ENCODE measurements at regions of chr4 and their contacts with region 1.

Region 1: GRCh38 chr4:103099691-103100392 is at the start of gene BDH2:
- DNase-seq: peak in 8 of 9 experiments; percentile 3 to 91 (median 48)
- ATAC-seq: peak; percentile 99
- H3K4me3 ChIP-seq: peak within 1 kb of the TSS; percentile 51 to 60
- H3K4me3 Mint-ChIP-seq: peak within 1 kb of the TSS; percentile 85
- H3K27ac ChIP-seq: peak within 1 kb of the TSS; percentile 4 to 37
- H3K27ac Mint-ChIP-seq: peak within 1 kb of the TSS; percentile 92
- H3K4me1 ChIP-seq: peaks cover 15% of the 10 kb centered on the region
- H3K4me1 Mint-ChIP-seq: peaks cover 41% of the 10 kb centered on the region
- H3K27me3 ChIP-seq: no peaks in the 10 kb centered on the region
- H3K27me3 Mint-ChIP-seq: no peaks in the 10 kb centered on the region
- CTCF ChIP-seq: peak; percentile 78
- total RNA-seq, gene BDH2: 16.4 to 19.9 TPM

Region 2: GRCh38 chr4:102430461-102430910 is 669.4 kb before region 1 on chr4:
- CTCF ChIA-PET with region 1: no interaction called
- POLR2A ChIA-PET with region 1: no interaction called
- intact Hi-C with region 1: loop called (anchors 2 to 5 kb)
- DNase-seq: peak in 1 of 9 experiments; percentile 19
- ATAC-seq: no peak
- H3K4me3 ChIP-seq: peak overlapping the region; percentile 57 to 58
- H3K4me3 Mint-ChIP-seq: peak overlapping the region; percentile 88
- H3K27ac ChIP-seq: peak overlapping the region; percentile 34 to 55
- H3K27ac Mint-ChIP-seq: no peak overlapping the region
- H3K4me1 ChIP-seq: peaks cover 4% of the 10 kb centered on the region
- H3K4me1 Mint-ChIP-seq: peaks cover 8% of the 10 kb centered on the region
- H3K27me3 ChIP-seq: no peaks in the 10 kb centered on the region
- H3K27me3 Mint-ChIP-seq: no peaks in the 10 kb centered on the region
- CTCF ChIP-seq: no peak

Region 3: GRCh38 chr4:102620697-102621497 is 478.9 kb before region 1 on chr4:
- CTCF ChIA-PET with region 1: interaction called, 4 read pairs
- POLR2A ChIA-PET with region 1: no interaction called
- intact Hi-C with region 1: loop called in 1 of 2 experiments (anchors 5 kb)
- DNase-seq: peak in 1 of 9 experiments; percentile 56
- ATAC-seq: peak; percentile 50
- H3K4me3 ChIP-seq: no peak overlapping the region
- H3K4me3 Mint-ChIP-seq: no peak overlapping the region
- H3K27ac ChIP-seq: no peak overlapping the region
- H3K27ac Mint-ChIP-seq: peak overlapping the region; percentile 53
- H3K4me1 ChIP-seq: peaks cover 28% of the 10 kb centered on the region
- H3K4me1 Mint-ChIP-seq: peaks cover 46% of the 10 kb centered on the region
- H3K27me3 ChIP-seq: no peaks in the 10 kb centered on the region
- H3K27me3 Mint-ChIP-seq: no peaks in the 10 kb centered on the region
- CTCF ChIP-seq: peak; percentile 26

Region 4: GRCh38 chr4:102674881-102675540 is 424.8 kb before region 1 on chr4:
- CTCF ChIA-PET with region 1: no interaction called
- POLR2A ChIA-PET with region 1: no interaction called
- intact Hi-C with region 1: no loop called
- DNase-seq: no peak
- ATAC-seq: no peak
- H3K4me3 ChIP-seq: no peak overlapping the region
- H3K4me3 Mint-ChIP-seq: no peak overlapping the region
- H3K27ac ChIP-seq: no peak overlapping the region
- H3K27ac Mint-ChIP-seq: peak overlapping the region; percentile 29
- H3K4me1 ChIP-seq: peaks cover 8% of the 10 kb centered on the region
- H3K4me1 Mint-ChIP-seq: peaks cover 11% of the 10 kb centered on the region
- H3K27me3 ChIP-seq: no peaks in the 10 kb centered on the region
- H3K27me3 Mint-ChIP-seq: no peaks in the 10 kb centered on the region
- CTCF ChIP-seq: no peak

Region 5: DNA sequence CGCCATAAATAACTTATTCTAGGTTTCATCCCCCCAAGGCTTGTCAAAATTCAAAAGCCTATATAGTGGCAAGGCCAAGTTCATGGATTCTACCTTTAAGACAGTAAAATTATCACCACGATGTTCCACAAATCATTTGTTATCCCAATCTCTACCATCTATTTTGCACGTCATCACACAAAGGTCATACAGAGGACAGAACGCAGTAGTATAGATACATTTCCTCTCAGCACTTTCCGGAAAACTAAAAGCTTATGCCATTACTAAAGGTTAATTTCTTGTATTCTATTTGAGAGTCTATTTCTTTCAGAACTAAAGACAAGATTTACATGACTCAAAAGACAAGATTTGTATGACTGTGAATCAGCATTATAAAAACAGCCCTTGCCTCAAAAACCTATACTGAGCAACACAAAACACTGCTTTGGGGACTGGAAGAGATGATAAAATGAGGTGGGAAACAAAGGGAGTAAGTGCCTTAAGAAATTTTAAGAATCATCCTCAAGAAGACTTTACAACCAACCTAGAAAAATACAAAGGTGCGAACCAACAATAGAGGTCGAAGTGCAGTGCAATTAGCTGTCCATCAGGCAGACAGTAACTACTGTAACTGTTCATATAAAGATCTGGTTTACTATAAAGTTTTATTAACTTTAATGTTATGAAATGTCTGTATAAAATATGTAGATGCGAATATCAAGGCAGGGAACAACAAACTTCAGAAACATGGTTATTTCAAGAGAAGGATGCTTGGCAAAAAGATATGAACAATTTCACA is 280.1 kb before region 1 on chr4:
- CTCF ChIA-PET with region 1: no interaction called
- POLR2A ChIA-PET with region 1: no interaction called
- intact Hi-C with region 1: no loop called
- DNase-seq: peak in 4 of 9 experiments; percentile 18 to 80 (median 44)
- ATAC-seq: peak; percentile 74
- H3K4me3 ChIP-seq: peak overlapping the region; percentile 4 to 25
- H3K4me3 Mint-ChIP-seq: peak overlapping the region; percentile 85
- H3K27ac ChIP-seq: peak overlapping the region; percentile 46 to 61
- H3K27ac Mint-ChIP-seq: peak overlapping the region; percentile 95
- H3K4me1 ChIP-seq: peaks cover 95% of the 10 kb centered on the region
- H3K4me1 Mint-ChIP-seq: peaks cover 85% of the 10 kb centered on the region
- H3K27me3 ChIP-seq: no peaks in the 10 kb centered on the region
- H3K27me3 Mint-ChIP-seq: no peaks in the 10 kb centered on the region
- CTCF ChIP-seq: no peak

Region 6: GRCh38 chr4:103019308-103020124 is 80.3 kb before region 1 on chr4 and contains the start of gene SLC9B1:
- CTCF ChIA-PET with region 1: interaction called, 6 read pairs
- POLR2A ChIA-PET with region 1: no interaction called
- intact Hi-C with region 1: loop called in 1 of 2 experiments (anchors 2 kb)
- DNase-seq: peak; percentile 86 to 96 (median 94)
- ATAC-seq: peak; percentile 92
- H3K4me3 ChIP-seq: peak within 1 kb of the TSS; percentile 70 to 75
- H3K4me3 Mint-ChIP-seq: peak within 1 kb of the TSS; percentile 87
- H3K27ac ChIP-seq: peak within 1 kb of the TSS; percentile 86 to 87
- H3K27ac Mint-ChIP-seq: peak within 1 kb of the TSS; percentile 97
- H3K4me1 ChIP-seq: peaks cover 17% of the 10 kb centered on the region
- H3K4me1 Mint-ChIP-seq: peaks cover 20% of the 10 kb centered on the region
- H3K27me3 ChIP-seq: no peaks in the 10 kb centered on the region
- H3K27me3 Mint-ChIP-seq: no peaks in the 10 kb centered on the region
- CTCF ChIP-seq: no peak
- total RNA-seq, gene SLC9B1: 1.7 to 4.0 TPM

Region 7: DNA sequence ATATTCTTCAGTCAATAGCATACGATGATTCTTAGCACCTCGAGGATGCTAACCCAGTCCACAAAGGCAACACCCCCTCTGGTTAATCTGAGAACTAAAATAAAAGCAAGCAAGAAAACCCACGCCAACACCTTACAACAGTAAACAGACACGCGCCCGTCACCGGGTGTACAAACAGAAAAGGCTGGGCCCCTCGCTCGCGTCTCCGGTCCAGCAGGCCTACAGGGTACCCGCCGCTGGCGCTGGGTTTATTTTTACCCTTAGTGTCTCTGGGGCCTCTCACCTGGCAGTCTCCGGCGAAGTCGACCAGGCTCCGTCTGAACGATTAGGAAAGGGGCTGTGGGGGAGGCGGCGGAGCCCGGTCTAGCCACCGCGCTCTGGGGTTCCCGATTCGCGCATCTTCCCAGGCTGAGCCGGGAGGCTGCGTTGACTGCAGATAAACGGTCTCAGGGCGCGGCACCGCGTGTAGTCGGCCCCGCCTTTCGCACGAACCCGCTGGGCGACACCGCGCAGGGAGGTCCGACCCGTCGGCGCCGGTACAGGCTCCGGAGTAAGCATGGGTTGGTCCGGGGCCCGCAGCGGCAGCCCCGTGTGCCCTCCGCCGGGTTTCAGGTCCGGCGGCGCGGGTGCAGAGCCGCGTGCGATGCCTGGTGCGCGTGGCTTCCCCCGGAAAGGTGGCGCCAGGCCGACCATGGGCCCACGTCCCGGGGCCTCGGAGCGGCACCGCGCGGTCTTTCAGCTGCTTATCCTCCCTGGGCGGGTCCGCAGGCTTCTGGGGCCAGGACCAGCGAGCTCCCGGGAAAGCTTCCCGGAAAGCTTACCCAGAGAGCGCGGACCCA is 23.7 kb before region 1 on chr4:
- CTCF ChIA-PET with region 1: interaction called, 7 read pairs
- POLR2A ChIA-PET with region 1: interaction called, 6 read pairs
- intact Hi-C with region 1: loop called in 1 of 2 experiments (anchors 2 kb)
- DNase-seq: peak; percentile 39 to 84 (median 64)
- ATAC-seq: peak; percentile 79
- H3K4me3 ChIP-seq: peak overlapping the region; percentile 80
- H3K4me3 Mint-ChIP-seq: peak overlapping the region; percentile 94
- H3K27ac ChIP-seq: peak overlapping the region; percentile 89 to 95
- H3K27ac Mint-ChIP-seq: peak overlapping the region; percentile 99
- H3K4me1 ChIP-seq: peaks cover 25% of the 10 kb centered on the region
- H3K4me1 Mint-ChIP-seq: peaks cover 49% of the 10 kb centered on the region
- H3K27me3 ChIP-seq: no peaks in the 10 kb centered on the region
- H3K27me3 Mint-ChIP-seq: no peaks in the 10 kb centered on the region
- CTCF ChIP-seq: no peak

Measured in CD8-positive, alpha-beta T cell (primary cell).